Psoas muscle (tissue), 8 donors: ENCODE measurements at regions of chr17 and their contacts with region 1.

Region 1: GRCh38 chr17:34199932-34200534 is 55.1 kb upstream of the CCL2 start:
- DNase-seq: peak; percentile 51 to 58
- ATAC-seq: peak; percentile 76 to 90 (median 88)
- H3K4me3 ChIP-seq: no peak overlapping the region
- H3K27ac ChIP-seq: no peak overlapping the region
- H3K4me1 ChIP-seq: no peaks in the 10 kb centered on the region
- H3K27me3 ChIP-seq: peaks cover 0 to 3% (median 2%) of the 10 kb centered on the region in 3 donors
- CTCF ChIP-seq: peak; percentile 99

Region 2: GRCh38 chr17:34146440-34147043 is 53.5 kb before region 1 on chr17:
- intact Hi-C with region 1: no loop called
- DNase-seq: no peak
- ATAC-seq: no peak
- H3K4me3 ChIP-seq: no peak overlapping the region
- H3K27ac ChIP-seq: no peak overlapping the region
- H3K4me1 ChIP-seq: no peaks in the 10 kb centered on the region
- H3K27me3 ChIP-seq: peaks cover 0 to 13% (median 2%) of the 10 kb centered on the region in 3 donors
- CTCF ChIP-seq: peak; percentile 11

Region 3: DNA sequence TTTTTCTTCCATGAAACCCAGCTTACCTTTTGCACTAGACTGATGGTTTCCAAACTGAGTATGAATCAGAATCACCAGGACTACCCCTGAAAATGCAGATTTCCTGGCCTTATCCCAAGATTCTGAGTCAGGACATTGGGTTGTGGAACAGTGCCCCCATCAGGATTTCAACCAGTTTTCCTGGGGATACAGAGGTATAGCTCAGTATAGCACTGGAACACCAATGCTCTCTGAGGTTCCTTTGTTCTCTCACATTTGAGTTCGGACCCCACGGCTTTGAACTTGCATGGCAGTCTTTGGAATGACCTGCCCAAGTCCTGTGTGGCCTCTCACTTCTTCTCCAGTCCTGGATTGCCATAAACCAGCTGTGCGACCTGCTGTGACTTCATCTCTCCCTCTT is 106.4 kb after region 1 on chr17:
- intact Hi-C with region 1: loop called (anchors 1 to 5 kb)
- DNase-seq: no peak
- ATAC-seq: peak in 3 of 4 donors; percentile 62 to 72 (median 64)
- H3K4me3 ChIP-seq: no peak overlapping the region
- H3K27ac ChIP-seq: no peak overlapping the region
- H3K4me1 ChIP-seq: peaks cover 3% of the 10 kb centered on the region
- H3K27me3 ChIP-seq: no peaks in the 10 kb centered on the region
- CTCF ChIP-seq: peak; percentile 25